CD4-positive, alpha-beta T cell (primary cell): ENCODE measurements at regions of chr6 and their contacts with region 1.

Region 1: GRCh38 chr6:139134817-139135581 is at the start of gene HECA:
- DNase-seq: peak; percentile 97 to 100 (median 99)
- ATAC-seq: peak; percentile 78
- H3K4me3 ChIP-seq: peak within 1 kb of the TSS; percentile 72
- H3K4me3 Mint-ChIP-seq: peak within 1 kb of the TSS; percentile 90
- H3K27ac ChIP-seq: peak within 1 kb of the TSS; percentile 94 to 95
- H3K27ac Mint-ChIP-seq: peak within 1 kb of the TSS; percentile 97
- H3K4me1 ChIP-seq: peaks cover 46% of the 10 kb centered on the region
- H3K4me1 Mint-ChIP-seq: peaks cover 77% of the 10 kb centered on the region
- H3K27me3 ChIP-seq: no peaks in the 10 kb centered on the region
- H3K27me3 Mint-ChIP-seq: no peaks in the 10 kb centered on the region
- CTCF ChIP-seq: no peak
- total RNA-seq, gene HECA: 203 to 207 TPM

Region 2: GRCh38 chr6:139028658-139029469 is 106.1 kb before region 1 on chr6 and contains the start of gene ABRACL:
- CTCF ChIA-PET with region 1: interaction called, 3 read pairs
- POLR2A ChIA-PET with region 1: interaction called, 17 read pairs
- intact Hi-C with region 1: loop called in 1 of 2 experiments (anchors 5 kb)
- DNase-seq: peak; percentile 48 to 88 (median 69)
- ATAC-seq: peak; percentile 89
- H3K4me3 ChIP-seq: peak within 1 kb of the TSS; percentile 85
- H3K4me3 Mint-ChIP-seq: peak within 1 kb of the TSS; percentile 97
- H3K27ac ChIP-seq: peak within 1 kb of the TSS; percentile 84 to 90
- H3K27ac Mint-ChIP-seq: peak within 1 kb of the TSS; percentile 96
- H3K4me1 ChIP-seq: peaks cover 20% of the 10 kb centered on the region
- H3K4me1 Mint-ChIP-seq: peaks cover 35% of the 10 kb centered on the region
- H3K27me3 ChIP-seq: no peaks in the 10 kb centered on the region
- H3K27me3 Mint-ChIP-seq: no peaks in the 10 kb centered on the region
- CTCF ChIP-seq: no peak
- total RNA-seq, gene ABRACL: 36.8 to 40.6 TPM

Region 3: DNA sequence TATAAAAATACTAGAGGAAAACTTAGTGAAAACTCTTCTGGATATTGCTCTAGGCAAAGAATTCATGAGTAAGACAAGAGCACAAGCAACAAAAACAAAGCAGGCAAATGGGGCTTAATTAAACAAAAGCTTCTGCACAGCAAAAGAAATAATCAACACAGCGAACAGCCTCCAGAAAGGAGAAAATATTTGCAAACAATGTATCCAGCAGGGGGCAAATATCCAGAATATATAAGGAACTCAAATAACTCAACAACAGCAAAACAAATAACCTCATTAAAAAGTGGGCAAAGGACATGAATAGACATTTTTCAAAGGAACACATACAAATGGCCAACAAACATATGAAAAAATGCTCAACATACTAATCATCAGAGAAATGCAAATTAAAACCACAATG is 17.3 kb before region 1 on chr6:
- CTCF ChIA-PET with region 1: interaction called, 4 read pairs
- POLR2A ChIA-PET with region 1: interaction called, 55 read pairs
- intact Hi-C with region 1: loop called in 1 of 2 experiments (anchors 1 kb)
- DNase-seq: no peak
- ATAC-seq: no peak
- H3K4me3 ChIP-seq: no peak overlapping the region
- H3K4me3 Mint-ChIP-seq: peak overlapping the region; percentile 13
- H3K27ac ChIP-seq: no peak overlapping the region
- H3K27ac Mint-ChIP-seq: peak overlapping the region; percentile 83
- H3K4me1 ChIP-seq: peaks cover 33% of the 10 kb centered on the region
- H3K4me1 Mint-ChIP-seq: peaks cover 53% of the 10 kb centered on the region
- H3K27me3 ChIP-seq: no peaks in the 10 kb centered on the region
- H3K27me3 Mint-ChIP-seq: no peaks in the 10 kb centered on the region
- CTCF ChIP-seq: no peak

Region 4: DNA sequence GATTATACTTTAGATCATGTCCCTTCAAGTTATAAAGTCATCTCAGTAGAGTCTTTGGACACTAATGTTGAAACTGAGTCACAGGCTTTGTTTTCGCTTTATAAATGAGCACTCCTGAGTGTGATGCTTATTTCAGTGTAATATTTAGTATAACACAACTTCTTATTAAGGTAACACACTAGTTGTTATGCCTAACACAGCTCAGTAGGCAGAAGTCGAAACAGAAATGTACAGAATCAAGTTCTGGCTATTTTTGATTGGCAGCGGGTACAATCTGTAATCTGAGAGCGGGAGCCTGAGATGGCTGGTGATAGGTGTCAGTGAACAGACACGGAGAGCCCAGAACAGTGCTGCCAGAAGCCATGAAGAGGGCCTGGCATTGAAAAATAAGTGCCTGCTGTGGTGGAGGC is 11.3 kb after region 1 on chr6:
- CTCF ChIA-PET with region 1: interaction called, 8 read pairs
- POLR2A ChIA-PET with region 1: interaction called, 66 read pairs
- intact Hi-C with region 1: loop called in 1 of 2 experiments (anchors 1 kb)
- DNase-seq: peak in 1 of 14 experiments; percentile 38
- ATAC-seq: no peak
- H3K4me3 ChIP-seq: peak overlapping the region; percentile 29
- H3K4me3 Mint-ChIP-seq: peak overlapping the region; percentile 61
- H3K27ac ChIP-seq: peak overlapping the region in 1 of 2 donors; percentile 11
- H3K27ac Mint-ChIP-seq: peak overlapping the region; percentile 80
- H3K4me1 ChIP-seq: peaks cover 76% of the 10 kb centered on the region
- H3K4me1 Mint-ChIP-seq: peaks cover 95% of the 10 kb centered on the region
- H3K27me3 ChIP-seq: no peaks in the 10 kb centered on the region
- H3K27me3 Mint-ChIP-seq: no peaks in the 10 kb centered on the region
- CTCF ChIP-seq: no peak

Region 5: DNA sequence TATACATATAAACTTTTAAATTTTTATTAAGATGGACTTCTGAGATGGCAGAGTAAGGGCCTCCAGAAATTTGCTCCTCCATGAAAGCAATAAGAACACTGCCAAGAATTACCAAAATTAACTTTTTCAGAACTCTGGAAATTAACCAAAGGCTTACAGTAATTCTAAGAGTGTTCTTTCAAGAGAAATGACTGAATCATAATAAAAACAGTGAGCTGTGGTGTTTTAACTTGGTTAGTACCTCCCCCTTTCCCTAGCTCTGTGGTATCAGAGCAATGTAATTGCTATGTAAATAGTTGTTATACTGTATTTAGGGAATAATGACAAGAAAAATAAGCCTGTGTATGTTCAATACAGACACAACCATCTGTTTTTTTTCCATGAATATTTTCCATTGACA is 18.9 kb after region 1 on chr6:
- CTCF ChIA-PET with region 1: interaction called, 5 read pairs
- POLR2A ChIA-PET with region 1: interaction called, 157 read pairs
- intact Hi-C with region 1: loop called in 1 of 2 experiments (anchors 1 kb)
- DNase-seq: no peak
- ATAC-seq: no peak
- H3K4me3 ChIP-seq: no peak overlapping the region
- H3K4me3 Mint-ChIP-seq: peak overlapping the region; percentile 43
- H3K27ac ChIP-seq: no peak overlapping the region
- H3K27ac Mint-ChIP-seq: peak overlapping the region; percentile 72
- H3K4me1 ChIP-seq: peaks cover 69% of the 10 kb centered on the region
- H3K4me1 Mint-ChIP-seq: peaks cover 85% of the 10 kb centered on the region
- H3K27me3 ChIP-seq: no peaks in the 10 kb centered on the region
- H3K27me3 Mint-ChIP-seq: no peaks in the 10 kb centered on the region
- CTCF ChIP-seq: no peak

Region 6: GRCh38 chr6:139161817-139162284 is 26.9 kb after region 1 on chr6:
- CTCF ChIA-PET with region 1: interaction called, 12 read pairs
- POLR2A ChIA-PET with region 1: interaction called, 157 read pairs
- intact Hi-C with region 1: loop called (anchors 1 kb)
- DNase-seq: peak in 13 of 14 experiments; percentile 46 to 84 (median 66)
- ATAC-seq: peak; percentile 55
- H3K4me3 ChIP-seq: peak overlapping the region; percentile 11
- H3K4me3 Mint-ChIP-seq: peak overlapping the region; percentile 76
- H3K27ac ChIP-seq: peak overlapping the region; percentile 32 to 70
- H3K27ac Mint-ChIP-seq: peak overlapping the region; percentile 84
- H3K4me1 ChIP-seq: peaks cover 94% of the 10 kb centered on the region
- H3K4me1 Mint-ChIP-seq: peaks cover 88% of the 10 kb centered on the region
- H3K27me3 ChIP-seq: no peaks in the 10 kb centered on the region
- H3K27me3 Mint-ChIP-seq: no peaks in the 10 kb centered on the region
- CTCF ChIP-seq: no peak

Region 7: GRCh38 chr6:139173172-139173571 is 38.2 kb after region 1 on chr6:
- CTCF ChIA-PET with region 1: interaction called, 7 read pairs
- POLR2A ChIA-PET with region 1: interaction called, 157 read pairs
- intact Hi-C with region 1: no loop called
- DNase-seq: peak in 4 of 14 experiments; percentile 42 to 70 (median 54)
- ATAC-seq: peak; percentile 71
- H3K4me3 ChIP-seq: no peak overlapping the region
- H3K4me3 Mint-ChIP-seq: peak overlapping the region; percentile 40
- H3K27ac ChIP-seq: peak overlapping the region; percentile 31 to 49
- H3K27ac Mint-ChIP-seq: peak overlapping the region; percentile 48
- H3K4me1 ChIP-seq: peaks cover 69% of the 10 kb centered on the region
- H3K4me1 Mint-ChIP-seq: peaks cover 95% of the 10 kb centered on the region
- H3K27me3 ChIP-seq: no peaks in the 10 kb centered on the region
- H3K27me3 Mint-ChIP-seq: no peaks in the 10 kb centered on the region
- CTCF ChIP-seq: peak; percentile 39

Region 8: DNA sequence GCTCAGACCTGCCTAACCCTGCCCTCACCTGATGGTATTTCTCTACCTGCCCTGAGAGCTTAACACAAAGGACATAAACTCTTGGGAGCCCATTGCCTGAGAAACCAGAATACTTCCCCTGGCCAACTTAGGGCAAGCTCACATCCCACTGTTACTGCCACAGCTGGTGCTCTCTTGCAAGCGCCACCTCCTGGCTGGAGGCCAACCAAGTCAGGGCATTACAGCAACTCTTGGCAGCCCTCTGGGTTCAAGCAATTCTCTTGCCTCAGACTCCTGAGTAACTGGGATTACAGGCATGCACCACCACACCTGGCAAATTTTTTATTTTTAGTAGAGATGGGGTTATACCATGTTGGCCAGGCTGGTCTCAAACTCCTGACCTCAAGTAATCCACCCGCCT is 70.0 kb after region 1 on chr6:
- CTCF ChIA-PET with region 1: no interaction called
- POLR2A ChIA-PET with region 1: no interaction called
- intact Hi-C with region 1: no loop called
- DNase-seq: no peak
- ATAC-seq: no peak
- H3K4me3 ChIP-seq: no peak overlapping the region
- H3K4me3 Mint-ChIP-seq: no peak overlapping the region
- H3K27ac ChIP-seq: no peak overlapping the region
- H3K27ac Mint-ChIP-seq: no peak overlapping the region
- H3K4me1 ChIP-seq: no peaks in the 10 kb centered on the region
- H3K4me1 Mint-ChIP-seq: peaks cover 11% of the 10 kb centered on the region
- H3K27me3 ChIP-seq: no peaks in the 10 kb centered on the region
- H3K27me3 Mint-ChIP-seq: no peaks in the 10 kb centered on the region
- CTCF ChIP-seq: no peak

Region 9: DNA sequence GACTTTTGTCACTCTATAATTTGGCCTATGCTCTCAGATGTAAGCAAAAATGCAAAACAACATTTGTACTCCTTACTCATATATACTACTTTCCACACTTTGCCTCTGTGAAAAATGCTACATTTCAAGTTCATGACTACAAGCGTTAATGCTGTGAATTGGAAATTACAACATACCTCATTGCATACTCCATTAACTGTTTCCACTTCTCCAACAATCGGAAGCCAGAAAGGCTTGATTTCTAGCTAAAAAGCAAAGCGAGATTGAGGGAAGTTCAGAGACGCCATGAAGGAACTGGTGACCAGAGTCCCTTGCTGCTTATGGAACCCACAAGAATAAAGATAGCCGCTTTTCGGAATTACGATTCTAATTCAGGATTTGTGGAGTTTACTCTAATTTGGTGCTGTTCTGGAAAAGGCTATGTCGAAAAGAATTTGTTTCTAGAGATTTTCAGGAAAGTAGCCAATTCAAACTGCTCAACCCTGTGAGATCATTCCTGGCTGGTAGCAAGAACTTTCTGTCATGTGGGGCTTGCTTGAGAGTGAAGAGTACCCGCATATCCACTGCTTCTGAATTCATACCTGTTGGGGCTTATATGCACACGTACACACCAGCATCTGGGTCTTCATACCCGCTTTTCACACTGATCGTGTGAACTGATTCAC is 337.5 kb after region 1 on chr6:
- CTCF ChIA-PET with region 1: no interaction called
- POLR2A ChIA-PET with region 1: no interaction called
- intact Hi-C with region 1: no loop called
- DNase-seq: no peak
- ATAC-seq: no peak
- H3K4me3 ChIP-seq: no peak overlapping the region
- H3K4me3 Mint-ChIP-seq: no peak overlapping the region
- H3K27ac ChIP-seq: no peak overlapping the region
- H3K27ac Mint-ChIP-seq: no peak overlapping the region
- H3K4me1 ChIP-seq: peaks cover 4% of the 10 kb centered on the region
- H3K4me1 Mint-ChIP-seq: no peaks in the 10 kb centered on the region
- H3K27me3 ChIP-seq: no peaks in the 10 kb centered on the region
- H3K27me3 Mint-ChIP-seq: no peaks in the 10 kb centered on the region
- CTCF ChIP-seq: no peak

Region 10: DNA sequence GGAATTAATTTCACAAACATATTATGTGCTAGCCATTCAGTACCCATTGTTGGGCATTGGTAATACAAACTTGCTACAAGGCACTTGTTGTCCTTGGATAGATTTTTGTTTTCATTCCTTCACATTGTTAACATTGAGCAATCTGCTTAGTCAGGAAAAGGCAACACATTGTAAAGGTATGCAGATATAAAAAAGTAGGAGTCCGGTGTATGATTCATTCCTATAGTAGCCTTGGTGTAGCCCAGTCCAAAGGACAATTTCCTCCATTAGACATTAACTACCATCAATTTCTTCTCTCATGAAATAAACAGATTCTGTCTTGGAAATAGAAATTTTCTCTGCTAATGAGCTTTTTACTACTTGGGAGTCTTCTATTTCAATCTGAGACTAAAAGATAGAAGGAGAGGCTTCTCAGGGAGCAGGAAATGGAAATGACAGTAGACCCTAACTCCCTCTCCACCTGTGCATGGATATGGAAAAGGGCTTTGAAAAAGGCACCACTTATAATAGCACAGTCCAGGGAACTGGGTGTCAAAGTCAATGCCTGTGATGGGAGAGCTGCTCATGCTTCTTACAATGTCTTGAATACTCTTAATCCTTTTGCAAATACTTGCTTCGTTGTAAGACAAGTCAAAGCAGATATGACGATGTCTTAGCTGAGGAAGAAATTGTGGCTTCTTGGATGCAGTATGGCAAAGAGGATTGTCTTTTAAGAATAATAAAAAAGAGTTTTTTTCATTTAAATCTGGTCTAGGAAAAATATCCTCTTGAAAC is 608.9 kb after region 1 on chr6:
- CTCF ChIA-PET with region 1: no interaction called
- POLR2A ChIA-PET with region 1: no interaction called
- intact Hi-C with region 1: no loop called
- DNase-seq: no peak
- ATAC-seq: no peak
- H3K4me3 ChIP-seq: no peak overlapping the region
- H3K4me3 Mint-ChIP-seq: no peak overlapping the region
- H3K27ac ChIP-seq: no peak overlapping the region
- H3K27ac Mint-ChIP-seq: no peak overlapping the region
- H3K4me1 ChIP-seq: no peaks in the 10 kb centered on the region
- H3K4me1 Mint-ChIP-seq: no peaks in the 10 kb centered on the region
- H3K27me3 ChIP-seq: no peaks in the 10 kb centered on the region
- H3K27me3 Mint-ChIP-seq: no peaks in the 10 kb centered on the region
- CTCF ChIP-seq: no peak

Region 11: GRCh38 chr6:140062043-140063020 is 927.3 kb after region 1 on chr6:
- CTCF ChIA-PET with region 1: no interaction called
- POLR2A ChIA-PET with region 1: no interaction called
- intact Hi-C with region 1: no loop called
- DNase-seq: no peak
- ATAC-seq: no peak
- H3K4me3 ChIP-seq: no peak overlapping the region
- H3K4me3 Mint-ChIP-seq: no peak overlapping the region
- H3K27ac ChIP-seq: no peak overlapping the region
- H3K27ac Mint-ChIP-seq: no peak overlapping the region
- H3K4me1 ChIP-seq: no peaks in the 10 kb centered on the region
- H3K4me1 Mint-ChIP-seq: no peaks in the 10 kb centered on the region
- H3K27me3 ChIP-seq: peaks cover 0 to 4% of the 10 kb centered on the region in 2 experiments
- H3K27me3 Mint-ChIP-seq: peaks cover 15% of the 10 kb centered on the region
- CTCF ChIP-seq: no peak